BJ (cell line): ENCODE measurements at regions of chr5 and their contacts with region 1.

Region 1: DNA sequence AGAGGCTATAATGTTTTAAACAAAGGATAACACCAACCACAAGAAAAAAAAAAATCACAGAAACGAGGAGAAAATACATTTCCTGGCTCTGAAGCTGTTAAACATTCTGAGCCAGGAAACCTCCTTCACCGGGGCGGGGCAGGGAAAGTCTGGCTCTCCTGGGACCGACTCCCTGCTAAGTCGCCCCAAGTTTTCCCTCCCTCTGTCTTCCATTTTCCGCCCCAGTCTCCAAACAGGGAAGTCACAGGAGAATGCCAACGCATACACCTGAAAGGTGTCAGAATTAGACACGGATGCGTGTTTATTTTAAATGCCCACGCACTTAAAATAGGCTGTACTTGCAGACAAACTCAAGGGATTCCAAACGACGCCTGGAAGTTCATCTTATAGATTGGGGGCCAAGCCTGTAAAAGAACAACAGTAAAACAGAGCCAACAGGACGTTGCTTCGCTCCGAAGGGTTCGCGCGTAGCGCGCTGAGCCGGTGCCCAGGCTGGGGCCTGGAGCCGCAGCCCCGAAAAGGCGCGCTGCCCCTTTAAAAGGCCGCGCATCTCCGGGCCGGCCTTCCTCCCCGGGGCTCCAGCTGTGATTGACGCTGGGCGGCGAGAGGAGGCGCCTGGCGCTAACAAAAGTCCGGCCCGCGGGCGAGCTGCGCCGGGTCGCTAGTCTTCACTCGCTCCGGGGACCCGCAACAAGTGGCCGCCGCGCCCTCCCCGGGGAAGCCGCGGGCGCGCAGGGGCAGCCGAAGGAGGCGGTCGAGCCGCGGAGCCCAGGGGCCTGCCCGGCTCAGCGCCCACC is at the start of gene FBXL7:
- DNase-seq: no peak
- H3K4me3 ChIP-seq: peak within 1 kb of the TSS; percentile 77
- H3K27me3 ChIP-seq: no peaks in the 10 kb centered on the region
- CTCF ChIP-seq: peak; percentile 49
- polyA plus RNA-seq, gene FBXL7: 17.9 and 23.2 TPM in 2 replicates

Region 2: DNA sequence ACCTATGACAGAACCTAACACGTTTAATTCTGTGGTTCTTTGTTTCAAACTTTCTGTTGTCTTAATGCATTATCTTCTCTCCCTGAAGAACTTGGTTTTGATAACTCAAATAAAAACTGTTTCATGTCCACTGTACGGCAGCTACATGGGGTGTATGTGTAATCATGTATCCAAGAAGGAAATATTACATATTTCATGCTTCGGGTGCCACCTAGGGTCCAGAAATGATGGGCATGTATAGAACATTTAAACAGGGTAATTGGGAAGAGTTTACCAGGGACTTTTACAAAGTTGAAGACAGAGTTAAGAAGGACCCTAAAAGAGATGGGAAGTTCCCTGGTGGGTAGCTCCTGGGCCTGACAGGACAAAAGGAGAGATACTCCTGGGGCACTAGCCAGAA is 291.5 kb after region 1 on chr5:
- CTCF ChIA-PET with region 1: interaction called, 11 read pairs
- POLR2A ChIA-PET with region 1: no interaction called
- DNase-seq: no peak
- H3K4me3 ChIP-seq: no peak overlapping the region
- H3K27me3 ChIP-seq: no peaks in the 10 kb centered on the region
- CTCF ChIP-seq: no peak

Region 3: DNA sequence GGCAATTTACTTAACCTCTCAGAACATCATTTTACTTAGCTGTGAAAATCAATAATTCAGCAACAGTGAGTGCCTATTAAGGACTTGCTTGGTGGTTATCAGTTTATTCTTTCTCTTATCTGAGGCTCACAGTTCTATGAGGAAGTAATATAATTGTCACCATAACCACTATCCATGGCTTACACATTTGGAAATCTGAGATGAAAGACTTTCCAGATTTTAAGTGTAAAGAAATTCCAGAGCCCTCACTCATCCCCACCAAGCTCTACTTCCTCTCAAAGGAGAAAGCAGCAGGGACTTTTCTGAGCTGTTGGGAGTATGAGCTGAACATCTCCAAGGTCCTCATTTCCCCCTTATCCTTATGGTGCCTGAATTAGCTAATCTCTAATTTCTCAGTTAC is 321.8 kb after region 1 on chr5:
- CTCF ChIA-PET with region 1: interaction called, 20 read pairs
- POLR2A ChIA-PET with region 1: no interaction called
- DNase-seq: no peak
- H3K4me3 ChIP-seq: no peak overlapping the region
- H3K27me3 ChIP-seq: no peaks in the 10 kb centered on the region
- CTCF ChIP-seq: no peak